ENCODE measurements at regions of chr14 and their contacts with region 1.

Region 1: DNA sequence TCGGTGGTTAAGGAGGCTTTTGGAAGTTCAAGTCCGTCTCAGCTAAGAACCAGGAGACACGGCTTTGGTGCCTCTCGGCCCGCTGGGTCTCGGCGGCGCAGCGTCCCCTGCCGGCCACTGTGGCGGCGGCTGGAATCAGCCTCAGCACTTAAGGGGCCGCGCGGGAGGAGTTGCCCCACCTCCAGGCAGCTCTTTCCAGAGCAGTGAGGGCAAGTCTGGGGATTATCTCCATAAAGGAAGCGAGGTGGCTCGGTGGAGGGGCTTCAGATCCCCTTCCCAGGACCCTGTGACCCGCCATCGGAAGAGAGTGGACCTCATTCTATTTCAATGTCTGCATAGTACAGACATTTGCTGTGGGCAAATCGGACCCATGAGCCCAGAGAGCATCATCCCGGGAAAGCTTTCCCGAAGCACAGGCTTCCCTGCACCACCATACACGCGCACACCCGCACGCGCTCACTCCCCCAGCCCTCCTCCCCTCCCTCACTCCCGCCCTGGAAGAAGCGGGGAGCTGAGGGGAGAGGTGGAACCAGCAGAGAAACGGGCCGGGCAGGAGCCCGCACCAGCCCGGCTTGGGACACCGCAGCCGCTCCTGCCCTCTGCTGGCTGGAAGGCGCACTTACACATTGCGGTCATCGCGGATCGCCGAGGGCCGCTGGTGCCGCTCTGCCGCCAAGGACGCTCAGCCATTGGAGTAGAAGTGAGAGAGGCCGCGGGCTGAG is 15.9 kb downstream of the RNASE2 start:
- DNase-seq: no peak
- H3K4me3 ChIP-seq: peak overlapping the region; percentile 73
- CTCF ChIP-seq: peak; percentile 98

Region 2: DNA sequence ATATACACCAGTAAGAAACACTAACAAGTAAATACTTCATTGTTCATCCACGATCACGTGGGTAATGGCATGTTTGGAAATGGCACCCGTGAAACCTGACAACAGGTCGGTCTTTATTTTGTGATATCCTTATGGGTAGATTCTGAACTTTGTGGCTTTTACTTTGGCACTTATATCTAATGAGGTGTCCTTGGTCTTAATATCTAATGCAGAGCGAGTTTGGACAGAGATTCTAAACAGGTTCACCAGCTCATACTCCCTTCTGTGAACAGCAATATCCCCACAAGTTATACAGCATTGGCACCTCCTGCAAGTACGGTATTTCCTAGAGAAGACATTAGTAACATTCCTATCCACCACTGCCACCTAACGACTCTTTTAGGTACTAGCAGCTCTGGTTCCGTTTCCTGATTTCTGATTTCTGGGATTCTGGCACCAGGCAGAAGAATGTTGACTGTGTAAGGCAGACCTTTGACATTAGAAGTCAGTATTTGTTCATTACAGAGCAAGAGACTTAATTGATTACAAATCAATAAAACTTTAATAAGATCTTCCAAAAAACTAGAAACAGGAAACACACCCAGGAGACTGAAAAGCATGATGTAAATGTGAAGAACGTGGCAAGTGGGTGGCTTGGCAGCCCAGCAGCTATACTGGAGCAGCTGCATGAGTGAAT is 280.2 kb before region 1 on chr14:
- CTCF ChIA-PET with region 1: interaction called, 54 read pairs
- POLR2A ChIA-PET with region 1: interaction called, 3 read pairs
- DNase-seq: no peak
- H3K4me3 ChIP-seq: no peak overlapping the region
- CTCF ChIP-seq: peak; percentile 76

Region 3: DNA sequence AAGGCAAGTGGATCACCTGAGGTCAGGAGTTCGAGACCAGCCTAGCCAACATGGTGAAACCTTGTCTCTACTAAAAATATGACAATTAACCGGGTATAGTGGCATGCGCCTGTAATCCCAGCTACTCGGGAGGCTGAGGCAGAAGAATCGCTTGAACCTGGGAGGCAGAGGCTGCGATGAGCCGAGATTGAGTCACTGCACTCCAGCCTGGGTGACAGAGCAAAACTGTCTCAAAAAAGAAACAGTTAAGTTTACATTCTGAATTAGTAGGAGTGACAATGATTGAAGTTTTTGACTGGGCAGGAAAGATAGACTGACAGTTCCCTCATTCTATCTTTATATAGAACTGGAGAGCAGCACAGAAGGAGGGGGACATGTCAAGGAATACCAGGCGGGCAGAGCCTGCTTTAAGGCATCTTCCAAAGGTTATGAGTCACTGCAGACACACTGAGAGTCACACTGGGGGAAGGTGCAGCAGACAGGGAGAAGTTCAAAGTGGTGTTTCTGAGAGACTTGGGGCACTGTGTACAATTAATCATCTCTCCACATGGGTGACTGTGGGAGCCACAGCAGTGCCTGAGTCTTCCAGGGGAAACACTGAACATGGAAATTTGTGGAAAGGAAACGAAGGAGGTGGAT is 122.7 kb before region 1 on chr14:
- CTCF ChIA-PET with region 1: interaction called, 28 read pairs
- POLR2A ChIA-PET with region 1: no interaction called
- DNase-seq: no peak
- H3K4me3 ChIP-seq: no peak overlapping the region
- CTCF ChIP-seq: no peak

Region 4: DNA sequence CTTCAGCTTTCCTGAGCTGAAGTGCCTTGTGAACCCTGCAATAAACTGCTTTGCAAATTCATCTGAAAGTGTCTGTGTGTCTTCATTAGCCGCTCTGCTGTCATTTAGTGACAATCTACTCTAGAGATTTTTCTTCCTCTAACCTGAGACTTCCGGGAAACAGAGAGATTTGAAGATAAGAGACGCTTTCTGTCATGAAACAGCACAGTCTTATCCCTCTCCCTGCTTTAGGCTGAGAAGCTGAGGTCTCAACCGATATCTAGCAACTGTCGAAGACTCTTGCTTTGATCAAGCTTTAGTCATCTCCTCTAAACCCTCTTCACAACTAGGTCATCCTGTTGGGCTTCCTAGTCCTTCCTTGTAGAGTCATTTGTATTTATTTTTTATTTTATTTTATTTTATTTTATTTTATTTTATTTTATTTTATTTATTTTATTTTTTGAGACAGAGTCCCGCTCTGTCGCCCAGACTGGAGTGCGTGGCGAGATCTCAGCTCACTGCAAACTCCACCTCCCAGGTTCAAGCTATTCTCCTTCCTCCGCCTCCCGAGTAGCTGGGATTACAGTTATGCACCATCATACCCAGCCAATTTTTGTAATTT is 14.7 kb before region 1 on chr14:
- CTCF ChIA-PET with region 1: interaction called, 97 read pairs
- POLR2A ChIA-PET with region 1: no interaction called
- DNase-seq: no peak
- H3K4me3 ChIP-seq: no peak overlapping the region
- CTCF ChIP-seq: no peak

Region 5: DNA sequence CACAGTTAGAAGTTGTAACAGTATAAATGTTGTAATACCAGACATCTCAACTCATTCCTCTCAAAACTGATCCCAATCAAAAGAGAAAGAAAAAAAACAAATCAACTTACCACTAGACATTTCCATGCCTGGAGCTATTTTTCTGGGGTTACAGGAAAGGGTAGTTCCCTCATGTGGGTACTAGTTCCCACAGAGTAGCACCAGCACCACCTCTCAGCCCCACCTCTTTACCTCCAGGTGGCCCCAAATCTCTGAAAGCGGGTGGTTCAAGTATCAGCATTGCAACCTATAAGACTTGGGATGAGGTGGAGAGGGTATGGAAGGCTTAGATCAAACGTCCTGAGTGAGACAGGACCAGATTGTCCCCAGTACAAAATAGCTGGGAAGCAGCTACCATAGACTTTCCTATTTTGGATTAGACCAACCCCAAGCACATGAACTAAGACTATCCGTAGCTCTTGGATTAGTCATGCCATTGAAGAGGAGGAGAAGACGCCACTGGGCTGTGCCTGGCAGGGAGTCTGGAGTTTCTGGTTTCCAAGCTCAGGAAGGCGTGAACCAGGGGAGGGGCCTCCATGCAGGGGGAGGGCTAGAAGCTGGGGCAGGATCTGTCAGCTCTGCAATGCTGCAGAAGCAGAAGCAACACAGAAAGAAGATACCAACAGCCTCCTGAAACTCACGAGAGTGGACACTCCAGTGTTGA is 27.7 kb after region 1 on chr14 and contains the start of gene SLC39A2:
- CTCF ChIA-PET with region 1: interaction called, 26 read pairs
- POLR2A ChIA-PET with region 1: interaction called, 3 read pairs
- DNase-seq: peak; percentile 21
- H3K4me3 ChIP-seq: no peak within 1 kb of the TSS
- CTCF ChIP-seq: no peak

Region 6: GRCh38 chr14:21039585-21040369 is 68.6 kb after region 1 on chr14:
- CTCF ChIA-PET with region 1: interaction called, 14 read pairs
- POLR2A ChIA-PET with region 1: interaction called, 3 read pairs
- DNase-seq: peak; percentile 29
- H3K4me3 ChIP-seq: no peak overlapping the region
- CTCF ChIP-seq: peak; percentile 56

Measured in AG04449 (cell line).